ENCODE measurements at regions of chr10 and their contacts with region 1.

Region 1: DNA sequence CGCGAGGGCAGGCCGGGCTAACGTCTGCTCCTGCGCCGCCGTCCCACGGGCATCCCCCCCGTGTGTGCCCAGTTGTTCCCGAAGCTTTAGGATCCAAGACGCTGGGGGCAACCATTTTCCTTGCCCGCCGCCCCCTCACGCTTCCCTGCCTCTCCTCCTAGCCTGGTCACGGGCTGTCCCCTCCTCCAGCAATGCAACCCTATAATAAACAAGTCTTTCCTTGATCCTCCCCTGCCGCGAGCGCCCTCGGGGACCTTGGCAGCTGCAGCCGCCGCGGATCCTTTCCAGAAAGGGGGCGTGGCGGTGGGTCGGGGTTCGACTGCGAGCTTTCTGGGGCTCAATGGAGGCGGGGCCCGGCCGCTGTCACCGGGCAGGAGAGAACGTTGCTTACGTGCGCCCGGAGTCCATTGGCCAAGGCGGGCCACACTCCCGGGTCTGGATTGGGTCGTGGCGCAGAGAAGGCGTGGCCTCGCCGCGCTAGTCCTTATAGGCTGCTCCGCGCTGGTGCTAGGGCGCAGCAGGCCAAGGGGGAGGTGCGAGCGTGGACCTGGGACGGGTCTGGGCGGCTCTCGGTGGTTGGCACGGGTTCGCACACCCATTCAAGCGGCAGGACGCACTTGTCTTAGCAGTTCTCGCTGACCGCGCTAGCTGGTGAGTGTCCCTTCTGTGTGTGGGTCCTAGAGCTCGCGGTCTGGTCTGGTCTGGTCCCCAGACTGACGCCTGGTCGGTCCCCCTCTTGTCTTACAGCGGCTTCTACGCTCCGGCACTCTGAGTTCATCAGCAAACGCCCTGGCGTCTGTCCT is at the start of gene DDIT4:
- DNase-seq: peak; percentile 100
- ATAC-seq: peak; percentile 90
- total RNA-seq, gene DDIT4: 54.8 TPM

Region 2: GRCh38 chr10:71822448-71822763 is 451.2 kb before region 1 on chr10:
- intact Hi-C with region 1: no loop called
- DNase-seq: no peak
- ATAC-seq: no peak

Region 3: DNA sequence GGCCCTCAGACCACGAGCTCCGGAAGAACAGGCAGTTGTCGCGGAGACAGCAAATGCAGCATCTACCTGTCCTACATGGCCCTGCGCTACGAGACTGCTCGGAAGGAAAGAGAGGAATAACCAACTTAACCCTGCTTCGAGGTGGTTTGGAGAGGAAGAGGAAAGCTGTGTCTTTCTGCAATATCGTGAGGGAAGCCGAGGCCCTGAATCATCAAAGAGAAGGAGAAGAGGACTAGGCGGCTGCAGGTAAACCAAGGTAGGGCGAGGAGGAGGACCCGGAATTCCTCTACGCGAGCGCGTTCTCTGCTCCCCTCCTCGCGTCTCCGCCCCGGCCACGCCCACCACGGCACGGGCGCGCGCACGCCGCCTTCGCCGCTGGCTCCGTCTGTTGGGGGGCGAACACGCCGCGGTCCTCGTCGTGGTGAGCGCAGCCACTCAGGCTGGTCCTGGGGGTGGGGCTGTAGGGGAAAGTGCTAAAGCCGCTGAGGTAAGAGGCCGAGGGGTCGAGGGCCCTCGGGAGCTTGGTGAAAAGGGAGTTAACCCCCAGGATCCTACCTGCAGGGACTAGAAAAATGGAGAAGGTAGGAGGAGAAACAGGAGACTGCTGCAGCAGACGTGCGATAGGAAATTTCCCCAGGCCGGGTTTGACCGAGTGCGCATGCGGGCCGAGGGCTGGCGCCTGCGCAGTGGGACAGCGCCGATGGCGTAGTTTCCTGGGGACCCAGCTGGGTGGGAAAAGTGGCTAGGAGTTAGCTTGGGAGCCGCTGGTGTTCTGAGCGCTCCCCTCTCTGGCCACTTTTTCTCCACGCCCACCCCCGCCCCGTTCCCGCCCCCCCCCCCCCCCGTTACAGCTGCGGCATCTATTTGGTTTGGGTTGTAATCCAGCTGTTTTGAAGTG is 57.7 kb before region 1 on chr10 and contains the starts of genes ANAPC16 and ASCC1:
- intact Hi-C with region 1: loop called (anchors 2 kb)
- DNase-seq: peak; percentile 94
- ATAC-seq: peak; percentile 98
- total RNA-seq, gene ANAPC16: 242 TPM
- total RNA-seq, gene ASCC1: 32.0 TPM

Region 4: GRCh38 chr10:72319416-72320254 is 46.0 kb after region 1 on chr10:
- intact Hi-C with region 1: loop called (anchors 10 kb)
- DNase-seq: peak; percentile 97
- ATAC-seq: peak; percentile 89

Measured in Right ventricle myocardium superior (tissue), 1 donor.